Activated CD4-positive, alpha-beta T cell treated with anti-CD3 and anti-CD28 coated beads for 36 hours (primary cell): ENCODE measurements at regions of chr22 and their contacts with region 1.

Region 1: GRCh38 chr22:20741634-20742581 is 32.0 kb upstream of the SERPIND1 start:
- DNase-seq: peak; percentile 60
- ATAC-seq: no peak
- H3K4me3 Mint-ChIP-seq: no peak overlapping the region
- H3K27ac Mint-ChIP-seq: no peak overlapping the region
- H3K4me1 Mint-ChIP-seq: no peaks in the 10 kb centered on the region
- H3K27me3 Mint-ChIP-seq: no peaks in the 10 kb centered on the region

Region 2: DNA sequence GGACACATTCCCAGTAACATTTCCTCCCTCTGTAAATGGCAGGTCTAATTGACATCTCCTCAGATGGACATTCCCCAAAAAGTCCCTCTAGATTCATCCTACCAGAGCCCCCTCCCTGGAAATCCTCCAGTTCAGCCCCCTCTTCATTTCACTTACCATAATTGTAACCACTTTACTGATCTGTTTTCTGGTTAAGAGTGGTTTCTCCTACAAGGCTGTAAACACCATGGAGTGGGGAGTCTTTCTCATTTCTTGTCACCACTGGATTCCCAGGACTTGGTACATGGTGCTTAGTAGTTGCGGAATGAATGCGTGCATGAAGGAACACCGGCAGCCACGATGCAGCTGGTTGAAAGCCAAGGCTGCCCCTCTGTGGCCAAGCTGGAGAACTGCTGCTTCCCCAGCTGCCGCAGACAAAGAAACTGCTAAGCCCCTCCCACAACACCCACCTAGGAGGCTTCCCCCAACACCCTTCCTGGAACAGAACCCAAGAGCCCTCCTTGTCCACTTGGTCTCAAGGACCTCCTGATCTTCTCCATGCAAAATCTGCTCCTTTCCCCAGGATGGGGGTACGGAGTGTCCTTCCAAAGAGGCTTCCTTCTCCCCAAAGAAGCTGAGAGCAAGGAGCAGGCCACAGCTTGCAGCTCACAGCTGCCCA is 285.7 kb before region 1 on chr22:
- CTCF ChIA-PET with region 1: no interaction called
- POLR2A ChIA-PET with region 1: no interaction called
- intact Hi-C with region 1: no loop called
- DNase-seq: peak; percentile 88
- ATAC-seq: peak; percentile 95
- H3K4me3 Mint-ChIP-seq: no peak overlapping the region
- H3K27ac Mint-ChIP-seq: peak overlapping the region; percentile 59
- H3K4me1 Mint-ChIP-seq: peaks cover 20% of the 10 kb centered on the region
- H3K27me3 Mint-ChIP-seq: no peaks in the 10 kb centered on the region

Region 3: GRCh38 chr22:20563248-20563906 is 178.5 kb before region 1 on chr22:
- CTCF ChIA-PET with region 1: interaction called, 9 read pairs
- POLR2A ChIA-PET with region 1: no interaction called
- intact Hi-C with region 1: loop called in 1 of 2 experiments (anchors 1 kb)
- DNase-seq: peak; percentile 49
- ATAC-seq: peak; percentile 43
- H3K4me3 Mint-ChIP-seq: no peak overlapping the region
- H3K27ac Mint-ChIP-seq: peak overlapping the region; percentile 61
- H3K4me1 Mint-ChIP-seq: peaks cover 62% of the 10 kb centered on the region
- H3K27me3 Mint-ChIP-seq: no peaks in the 10 kb centered on the region

Region 4: DNA sequence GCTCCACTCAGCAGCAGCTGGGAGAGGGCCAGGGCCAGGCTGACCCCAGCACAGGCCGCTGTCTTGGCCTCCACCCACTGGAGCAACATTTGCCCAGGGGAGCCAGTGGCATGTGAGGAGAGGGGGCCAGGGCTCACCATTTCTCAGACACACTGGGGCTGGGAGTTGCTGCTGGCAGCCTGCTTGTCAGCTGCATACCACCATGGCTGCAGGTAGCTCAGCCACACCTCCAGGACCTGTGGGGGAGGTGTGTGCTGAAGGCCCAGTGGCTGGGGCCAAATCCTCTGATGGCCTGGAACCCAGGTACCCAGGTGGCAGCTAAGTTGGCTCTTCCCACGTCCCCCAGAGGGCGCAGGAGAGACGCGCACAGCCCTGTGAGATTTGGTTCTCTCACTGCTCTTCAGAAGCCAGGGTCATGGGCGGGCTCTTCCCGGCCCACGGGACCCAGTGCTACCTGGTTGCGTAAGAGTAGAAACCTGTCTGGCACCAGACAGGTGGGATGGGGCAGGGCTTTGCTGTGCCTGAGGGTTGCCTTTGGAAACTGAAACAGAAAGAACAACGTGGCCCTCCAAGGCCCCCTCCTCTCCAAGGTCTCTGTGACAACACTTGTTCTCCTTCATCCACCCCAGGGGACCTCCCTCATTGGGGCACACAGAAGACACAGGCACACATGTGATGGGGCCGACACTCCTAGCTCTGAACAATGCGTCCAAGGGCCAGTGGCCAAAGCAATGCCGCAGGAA is 135.7 kb before region 1 on chr22:
- CTCF ChIA-PET with region 1: interaction called, 10 read pairs
- POLR2A ChIA-PET with region 1: no interaction called
- intact Hi-C with region 1: loop called in 1 of 2 experiments (anchors 1 kb)
- DNase-seq: peak; percentile 85
- ATAC-seq: peak; percentile 93
- H3K4me3 Mint-ChIP-seq: no peak overlapping the region
- H3K27ac Mint-ChIP-seq: no peak overlapping the region
- H3K4me1 Mint-ChIP-seq: peaks cover 7% of the 10 kb centered on the region
- H3K27me3 Mint-ChIP-seq: no peaks in the 10 kb centered on the region

Region 5: GRCh38 chr22:20671409-20672081 is 70.4 kb before region 1 on chr22:
- CTCF ChIA-PET with region 1: interaction called, 3 read pairs
- POLR2A ChIA-PET with region 1: no interaction called
- intact Hi-C with region 1: loop called in 1 of 2 experiments (anchors 10 kb)
- DNase-seq: no peak
- ATAC-seq: no peak
- H3K4me3 Mint-ChIP-seq: no peak overlapping the region
- H3K27ac Mint-ChIP-seq: no peak overlapping the region
- H3K4me1 Mint-ChIP-seq: no peaks in the 10 kb centered on the region
- H3K27me3 Mint-ChIP-seq: peaks cover 26% of the 10 kb centered on the region